Heart right ventricle (tissue), 16 donors: ENCODE measurements at regions of chr20 and their contacts with region 1.

Region 1: DNA sequence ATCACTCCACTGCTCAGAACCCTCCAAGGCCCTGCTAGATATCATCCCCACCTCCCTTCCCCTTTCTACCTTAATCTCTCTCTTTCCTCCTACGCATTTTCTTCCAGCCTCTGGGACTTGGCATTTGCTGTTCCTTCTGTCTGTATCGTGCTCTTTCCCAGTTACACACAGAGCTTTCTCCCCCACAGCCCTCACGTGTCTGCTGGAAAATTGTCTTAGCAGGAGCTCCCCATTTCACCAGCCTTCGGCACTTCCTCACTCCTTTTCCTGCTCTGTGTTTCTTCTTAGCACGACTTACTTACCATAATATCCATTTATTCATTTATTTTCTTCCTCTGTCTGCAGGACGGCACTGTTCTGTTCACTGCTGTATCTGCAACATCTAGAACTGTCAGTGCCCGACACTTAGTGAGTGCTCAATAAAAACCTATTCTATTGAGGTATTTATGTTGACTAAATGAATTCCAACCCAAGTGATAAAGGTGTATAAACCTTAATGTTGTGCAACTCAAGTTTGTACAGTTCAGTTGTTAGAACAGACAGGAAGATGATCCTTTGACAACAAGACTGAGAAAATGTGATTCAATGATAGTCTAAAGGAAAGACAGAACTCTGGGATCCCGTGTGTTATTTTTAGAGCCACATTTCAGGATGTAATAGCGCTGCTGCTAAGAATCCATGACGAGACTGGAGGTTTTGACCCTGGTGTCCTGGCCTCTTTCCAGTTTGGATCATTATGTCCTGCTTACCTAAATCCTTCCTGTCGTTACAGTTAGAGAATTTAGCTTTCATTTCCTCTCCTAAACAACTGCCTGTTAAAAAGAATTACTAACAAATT is 170.1 kb upstream of the LAMP5 start:
- DNase-seq: peak in 1 of 2 donors; percentile 70
- ATAC-seq: peak; percentile 56 to 90 (median 80)
- H3K4me3 ChIP-seq: peak overlapping the region in 1 of 10 donors; percentile 0
- H3K27ac ChIP-seq: peak overlapping the region in 9 of 10 donors; percentile 16 to 79 (median 42)
- H3K4me1 ChIP-seq: peaks cover 9 to 55% (median 32%) of the 10 kb centered on the region in 9 donors
- H3K27me3 ChIP-seq: no peaks in the 10 kb centered on the region
- CTCF ChIP-seq: no peak

Region 2: DNA sequence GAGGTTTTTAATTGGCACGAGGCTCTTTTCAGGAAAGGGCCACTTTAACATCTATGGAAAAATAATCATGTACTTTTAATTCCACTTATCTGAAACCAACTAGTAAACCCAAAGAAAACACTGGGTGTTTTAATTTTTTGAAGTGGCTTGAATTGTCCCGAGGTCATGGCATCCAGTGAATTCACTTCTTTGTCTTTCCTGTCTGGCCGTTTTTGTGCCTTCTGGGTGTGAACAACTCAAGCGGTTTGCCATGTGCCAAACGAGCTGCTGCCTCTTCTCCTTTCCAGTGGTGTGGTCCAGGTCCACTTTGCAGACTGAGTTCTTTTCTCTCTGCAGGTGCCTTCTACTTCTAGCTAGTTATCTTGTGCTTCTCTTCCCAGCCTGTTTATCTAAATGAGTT is 157.9 kb before region 1 on chr20:
- intact Hi-C with region 1: no loop called
- DNase-seq: no peak
- ATAC-seq: no peak
- H3K4me3 ChIP-seq: no peak overlapping the region
- H3K27ac ChIP-seq: no peak overlapping the region
- H3K4me1 ChIP-seq: peaks cover 0 to 23% (median 8%) of the 10 kb centered on the region in 9 donors
- H3K27me3 ChIP-seq: no peaks in the 10 kb centered on the region
- CTCF ChIP-seq: no peak

Region 3: GRCh38 chr20:9215539-9215938 is 128.8 kb before region 1 on chr20:
- intact Hi-C with region 1: loop called in 1 of 10 experiments (anchors 5 kb)
- DNase-seq: no peak
- ATAC-seq: no peak
- H3K4me3 ChIP-seq: no peak overlapping the region
- H3K27ac ChIP-seq: no peak overlapping the region
- H3K4me1 ChIP-seq: peaks cover 0 to 43% (median 20%) of the 10 kb centered on the region in 9 donors
- H3K27me3 ChIP-seq: no peaks in the 10 kb centered on the region
- CTCF ChIP-seq: peak in 7 of 9 donors; percentile 21 to 45 (median 25)

Region 4: DNA sequence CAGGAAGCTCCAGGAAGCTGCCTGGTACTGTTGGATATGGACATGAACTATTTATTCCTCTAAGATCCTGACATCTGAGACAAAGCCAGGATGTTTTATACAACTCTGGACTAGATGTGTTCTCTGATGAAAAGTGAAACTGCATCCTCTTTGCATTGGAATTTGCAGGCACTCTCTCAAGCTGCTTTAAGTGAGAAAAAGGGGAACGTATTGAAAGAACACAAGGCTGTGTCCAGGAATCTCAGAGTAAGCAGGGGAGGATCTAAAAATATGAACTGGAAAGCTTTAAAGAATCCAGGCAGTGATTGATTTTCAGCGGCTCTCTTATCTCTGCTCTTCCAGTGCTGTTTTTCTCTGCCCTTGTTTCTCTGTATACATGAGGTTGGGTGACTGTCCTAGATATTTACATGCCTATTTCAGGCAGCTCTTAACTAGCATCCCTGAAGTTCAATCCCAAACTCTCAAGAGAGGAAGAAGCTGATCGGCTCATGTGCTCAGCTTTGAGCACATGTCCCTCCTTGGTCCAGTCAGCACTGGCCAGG is 81.6 kb before region 1 on chr20:
- intact Hi-C with region 1: loop called in 1 of 10 experiments (anchors 10 kb)
- DNase-seq: no peak
- ATAC-seq: peak; percentile 24 to 64 (median 53)
- H3K4me3 ChIP-seq: peak overlapping the region in 7 of 10 donors; percentile 10 to 28 (median 22)
- H3K27ac ChIP-seq: peak overlapping the region in 9 of 10 donors; percentile 22 to 78 (median 64)
- H3K4me1 ChIP-seq: peaks cover 7 to 58% (median 38%) of the 10 kb centered on the region in 9 donors
- H3K27me3 ChIP-seq: no peaks in the 10 kb centered on the region
- CTCF ChIP-seq: no peak

Region 5: GRCh38 chr20:9280666-9281065 is 63.6 kb before region 1 on chr20:
- intact Hi-C with region 1: loop called in 1 of 10 experiments (anchors 10 kb)
- DNase-seq: no peak
- ATAC-seq: peak in 2 of 8 donors; percentile 16 to 26
- H3K4me3 ChIP-seq: peak overlapping the region in 3 of 10 donors; percentile 4 to 9 (median 8)
- H3K27ac ChIP-seq: peak overlapping the region in 8 of 10 donors; percentile 1 to 78 (median 43)
- H3K4me1 ChIP-seq: peaks cover 3 to 70% (median 43%) of the 10 kb centered on the region in 9 donors
- H3K27me3 ChIP-seq: no peaks in the 10 kb centered on the region
- CTCF ChIP-seq: no peak